CD8-positive, alpha-beta memory T cell (primary cell): ENCODE measurements at regions of chr12 and their contacts with region 1.

Region 1: GRCh38 chr12:54439521-54440255 is 20.6 kb upstream of the ITGA5 start:
- DNase-seq: peak in 2 of 5 donors; percentile 55 to 63
- H3K4me3 ChIP-seq: no peak overlapping the region
- H3K4me3 Mint-ChIP-seq: no peak overlapping the region
- H3K27ac ChIP-seq: no peak overlapping the region
- H3K27ac Mint-ChIP-seq: peak overlapping the region in 4 of 8 donors; percentile 25 to 86 (median 72)
- H3K4me1 ChIP-seq: peaks cover 4% of the 10 kb centered on the region
- H3K4me1 Mint-ChIP-seq: peaks cover 4 to 5% (median 5%) of the 10 kb centered on the region in 3 donors
- H3K27me3 ChIP-seq: no peaks in the 10 kb centered on the region
- H3K27me3 Mint-ChIP-seq: peaks cover 2 to 8% of the 10 kb centered on the region in 2 donors

Region 2: GRCh38 chr12:54300732-54301427 is 138.8 kb before region 1 on chr12 and contains the start of gene NFE2:
- CTCF ChIA-PET with region 1: no interaction called
- POLR2A ChIA-PET with region 1: no interaction called
- DNase-seq: no peak
- H3K4me3 ChIP-seq: peak within 1 kb of the TSS; percentile 33
- H3K4me3 Mint-ChIP-seq: peak within 1 kb of the TSS in 6 of 7 donors; percentile 41 to 60 (median 56)
- H3K27ac ChIP-seq: peak within 1 kb of the TSS; percentile 80
- H3K27ac Mint-ChIP-seq: no peak within 1 kb of the TSS
- H3K4me1 ChIP-seq: peaks cover 8% of the 10 kb centered on the region
- H3K4me1 Mint-ChIP-seq: peaks cover 24 to 44% (median 40%) of the 10 kb centered on the region in 3 donors
- H3K27me3 ChIP-seq: peaks cover 26% of the 10 kb centered on the region
- H3K27me3 Mint-ChIP-seq: peaks cover 32 to 61% of the 10 kb centered on the region in 2 donors
- total RNA-seq, gene NFE2: not detected

Region 3: GRCh38 chr12:54311051-54311450 is 128.6 kb before region 1 on chr12:
- CTCF ChIA-PET with region 1: no interaction called
- POLR2A ChIA-PET with region 1: no interaction called
- DNase-seq: no peak
- H3K4me3 ChIP-seq: no peak overlapping the region
- H3K4me3 Mint-ChIP-seq: no peak overlapping the region
- H3K27ac ChIP-seq: no peak overlapping the region
- H3K27ac Mint-ChIP-seq: no peak overlapping the region
- H3K4me1 ChIP-seq: peaks cover 9% of the 10 kb centered on the region
- H3K4me1 Mint-ChIP-seq: peaks cover 10 to 13% (median 11%) of the 10 kb centered on the region in 3 donors
- H3K27me3 ChIP-seq: no peaks in the 10 kb centered on the region
- H3K27me3 Mint-ChIP-seq: peaks cover 3 to 15% of the 10 kb centered on the region in 2 donors

Region 4: GRCh38 chr12:54379401-54380201 is 60.1 kb before region 1 on chr12:
- CTCF ChIA-PET with region 1: interaction called, 18 read pairs
- POLR2A ChIA-PET with region 1: no interaction called
- DNase-seq: peak; percentile 77 to 89 (median 85)
- H3K4me3 ChIP-seq: peak overlapping the region; percentile 29
- H3K4me3 Mint-ChIP-seq: peak overlapping the region; percentile 11 to 87 (median 71)
- H3K27ac ChIP-seq: no peak overlapping the region
- H3K27ac Mint-ChIP-seq: peak overlapping the region in 3 of 8 donors; percentile 15 to 91 (median 54)
- H3K4me1 ChIP-seq: peaks cover 4% of the 10 kb centered on the region
- H3K4me1 Mint-ChIP-seq: peaks cover 6 to 10% (median 7%) of the 10 kb centered on the region in 3 donors
- H3K27me3 ChIP-seq: no peaks in the 10 kb centered on the region
- H3K27me3 Mint-ChIP-seq: no peaks in the 10 kb centered on the region

Region 5: DNA sequence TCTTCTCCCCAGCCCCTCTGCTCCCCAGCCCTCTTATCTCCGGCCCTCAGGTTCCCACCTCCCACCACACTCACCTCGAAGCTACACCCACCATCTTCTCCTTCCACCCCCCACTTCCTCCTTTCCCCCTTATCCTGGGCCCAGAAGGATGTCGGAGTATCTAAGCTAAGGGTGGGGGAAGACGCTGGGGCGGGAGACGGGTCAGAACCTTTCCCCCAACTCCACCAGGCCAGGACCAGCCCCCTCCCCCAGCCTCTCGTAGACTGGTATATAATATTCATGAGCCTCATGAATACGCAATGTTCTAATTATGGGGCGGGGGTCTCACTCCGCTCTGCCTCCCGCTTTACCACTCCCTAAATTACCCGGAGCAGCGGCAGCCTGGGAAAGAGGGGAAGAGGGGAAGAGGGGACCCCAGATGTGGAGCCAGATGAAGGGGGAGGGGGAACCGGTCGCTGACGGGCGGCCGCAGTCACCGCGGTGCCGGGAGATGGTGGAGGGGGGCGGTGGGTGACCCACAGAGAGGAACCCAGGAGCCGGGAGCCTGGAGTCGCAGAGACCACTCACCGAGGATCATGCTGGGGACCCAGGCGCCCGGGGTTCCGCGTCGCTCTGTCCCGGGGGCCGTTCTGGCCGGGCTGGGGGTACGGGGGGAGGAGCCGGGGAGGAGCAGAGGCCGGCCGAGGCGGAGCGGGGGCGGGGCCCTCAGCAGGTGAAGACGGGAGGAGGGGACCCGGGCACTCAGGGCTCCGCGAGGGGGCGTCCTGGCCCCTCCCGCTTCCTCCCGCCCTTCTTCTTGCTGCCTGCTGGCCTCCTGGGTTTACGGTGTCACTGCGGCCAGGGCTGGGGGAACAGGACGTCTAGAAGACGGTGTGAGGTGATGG is 48.8 kb before region 1 on chr12:
- CTCF ChIA-PET with region 1: interaction called, 386 read pairs
- POLR2A ChIA-PET with region 1: no interaction called
- DNase-seq: peak; percentile 60 to 82 (median 69)
- H3K4me3 ChIP-seq: peak overlapping the region; percentile 50
- H3K4me3 Mint-ChIP-seq: peak overlapping the region; percentile 7 to 91 (median 75)
- H3K27ac ChIP-seq: peak overlapping the region; percentile 38
- H3K27ac Mint-ChIP-seq: peak overlapping the region in 2 of 8 donors; percentile 75 to 91
- H3K4me1 ChIP-seq: peaks cover 22% of the 10 kb centered on the region
- H3K4me1 Mint-ChIP-seq: peaks cover 20 to 36% (median 30%) of the 10 kb centered on the region in 3 donors
- H3K27me3 ChIP-seq: no peaks in the 10 kb centered on the region
- H3K27me3 Mint-ChIP-seq: no peaks in the 10 kb centered on the region

Region 6: DNA sequence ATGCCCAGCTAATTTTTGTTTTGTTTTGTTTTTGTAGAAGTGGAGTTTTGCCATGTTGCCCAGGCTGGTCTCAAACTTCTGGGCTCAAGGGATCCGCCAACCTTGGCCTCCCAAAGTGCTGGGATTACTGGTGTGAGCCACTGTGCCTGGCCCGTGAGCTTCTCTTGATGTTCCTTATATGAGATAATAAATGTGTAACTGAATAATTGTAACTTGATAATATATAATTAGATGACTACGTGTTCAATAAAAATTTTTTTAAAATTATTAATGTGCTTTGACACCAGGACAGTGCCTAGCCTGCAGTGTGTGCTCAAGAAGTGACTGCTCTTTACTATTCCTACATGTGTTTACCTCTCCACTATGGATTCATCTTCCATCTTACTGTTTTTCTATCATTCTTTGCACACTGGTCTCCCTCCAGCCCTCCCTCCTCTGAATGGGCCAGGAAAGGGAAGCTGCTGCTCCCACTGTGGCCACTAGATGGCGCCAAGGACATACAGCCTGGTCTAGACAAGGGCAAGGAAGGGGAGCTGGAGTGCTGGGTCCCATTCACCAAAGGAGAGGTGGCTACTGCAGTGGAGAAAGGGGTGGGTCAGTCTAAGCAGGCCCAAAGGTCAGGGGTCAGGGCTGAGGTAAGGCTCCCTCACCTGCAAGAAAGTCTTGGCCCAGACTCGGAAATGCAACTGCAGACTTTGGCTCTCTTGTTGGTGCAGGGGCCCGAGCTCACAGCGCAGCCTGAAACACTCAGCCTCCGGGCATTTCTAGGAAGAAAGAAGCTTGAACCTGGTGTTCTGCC is 40.5 kb before region 1 on chr12:
- CTCF ChIA-PET with region 1: interaction called, 386 read pairs
- POLR2A ChIA-PET with region 1: interaction called, 17 read pairs
- DNase-seq: peak; percentile 77 to 91 (median 82)
- H3K4me3 ChIP-seq: no peak overlapping the region
- H3K4me3 Mint-ChIP-seq: no peak overlapping the region
- H3K27ac ChIP-seq: no peak overlapping the region
- H3K27ac Mint-ChIP-seq: peak overlapping the region; percentile 7 to 92 (median 44)
- H3K4me1 ChIP-seq: peaks cover 12% of the 10 kb centered on the region
- H3K4me1 Mint-ChIP-seq: peaks cover 10 to 23% (median 15%) of the 10 kb centered on the region in 3 donors
- H3K27me3 ChIP-seq: no peaks in the 10 kb centered on the region
- H3K27me3 Mint-ChIP-seq: no peaks in the 10 kb centered on the region

Region 7: DNA sequence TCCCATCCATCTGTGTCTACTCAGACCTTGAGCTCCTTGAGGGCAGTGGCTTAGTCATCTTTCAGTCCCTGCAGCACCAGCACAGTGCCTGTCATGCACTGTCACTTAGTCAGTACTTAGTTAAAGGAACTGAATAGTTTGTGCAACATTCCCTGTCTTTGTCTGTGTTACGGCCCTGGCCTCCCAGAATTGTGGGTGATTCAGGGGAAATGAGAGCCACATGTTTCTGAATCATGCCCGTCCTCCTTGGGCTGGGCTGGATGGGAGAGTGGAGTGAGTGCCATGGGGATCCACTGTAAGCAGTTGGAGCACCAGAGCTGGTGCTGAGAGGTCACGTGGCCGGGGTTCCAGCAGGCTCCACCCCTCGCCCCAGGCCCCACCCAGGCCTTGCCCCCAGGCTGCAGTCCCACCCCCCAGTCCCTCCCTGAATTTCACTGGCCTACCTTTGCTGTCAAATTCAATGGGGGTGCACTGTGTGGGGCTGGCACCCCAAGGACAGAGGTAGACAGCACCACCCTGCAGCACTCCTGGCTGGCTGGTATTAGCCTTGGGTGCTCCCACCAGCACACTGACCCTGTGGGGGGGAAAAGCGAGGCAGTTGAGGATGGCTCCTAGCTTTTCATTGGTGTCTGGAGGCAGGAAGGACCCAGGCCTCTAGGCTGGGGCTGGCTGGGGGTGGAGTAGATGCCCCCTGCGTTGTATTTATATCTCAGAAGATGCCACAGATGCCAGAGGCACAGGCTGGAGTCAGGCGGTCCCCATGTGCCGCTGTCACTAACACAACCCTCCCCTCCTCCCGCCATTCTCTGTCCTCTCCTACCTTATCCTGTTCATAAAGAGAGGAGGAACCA is 28.1 kb before region 1 on chr12:
- CTCF ChIA-PET with region 1: interaction called, 386 read pairs
- POLR2A ChIA-PET with region 1: interaction called, 3 read pairs
- DNase-seq: peak in 4 of 5 donors; percentile 37 to 62 (median 50)
- H3K4me3 ChIP-seq: peak overlapping the region; percentile 85
- H3K4me3 Mint-ChIP-seq: peak overlapping the region; percentile 32 to 88 (median 71)
- H3K27ac ChIP-seq: peak overlapping the region; percentile 81
- H3K27ac Mint-ChIP-seq: peak overlapping the region; percentile 91 to 100 (median 96)
- H3K4me1 ChIP-seq: peaks cover 65% of the 10 kb centered on the region
- H3K4me1 Mint-ChIP-seq: peaks cover 63 to 78% (median 66%) of the 10 kb centered on the region in 3 donors
- H3K27me3 ChIP-seq: no peaks in the 10 kb centered on the region
- H3K27me3 Mint-ChIP-seq: no peaks in the 10 kb centered on the region

Region 8: DNA sequence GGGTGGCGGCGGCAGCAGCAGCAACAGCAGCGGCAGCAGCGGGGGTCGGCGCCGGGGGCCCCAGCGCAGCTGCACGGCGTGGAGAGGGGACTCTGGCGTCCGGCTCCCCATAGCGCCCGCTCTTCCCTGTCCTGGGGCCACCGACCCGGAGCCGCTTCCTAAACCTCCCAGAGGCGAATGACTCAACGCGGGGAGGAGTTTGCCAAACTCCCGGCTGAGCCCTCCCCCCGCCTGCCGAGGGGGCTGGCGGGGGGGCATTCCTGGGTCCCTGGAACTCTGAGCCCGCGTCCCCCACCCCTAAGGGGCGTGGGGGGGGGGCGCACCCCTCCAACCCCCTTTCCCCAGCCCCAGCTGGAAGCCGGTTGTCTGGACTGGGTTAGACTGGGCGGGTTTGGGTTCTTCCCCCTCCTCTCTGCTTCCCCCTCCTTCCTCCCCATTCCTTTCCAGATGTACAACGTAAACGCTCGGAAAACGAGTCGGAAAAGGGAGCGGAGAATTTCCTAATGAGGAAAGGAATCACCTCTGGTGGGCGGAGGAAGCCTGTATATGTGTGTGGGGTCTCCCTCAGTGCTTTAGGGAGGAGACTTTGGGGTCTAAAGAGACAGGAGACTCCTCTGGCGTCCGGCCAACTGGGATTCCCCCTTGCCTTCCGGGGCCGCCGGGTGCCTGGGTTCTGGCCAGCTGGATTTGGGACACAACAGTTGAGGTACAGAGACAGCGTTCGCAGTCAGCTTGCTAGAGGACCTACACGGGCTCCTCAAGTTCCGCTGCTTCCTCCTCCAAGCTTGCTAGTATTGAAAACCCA is 20.4 kb before region 1 on chr12 and contains the start of gene ITGA5:
- CTCF ChIA-PET with region 1: interaction called, 39 read pairs
- POLR2A ChIA-PET with region 1: interaction called, 4 read pairs
- DNase-seq: peak in 4 of 5 donors; percentile 41 to 66 (median 52)
- H3K4me3 ChIP-seq: peak within 1 kb of the TSS; percentile 89
- H3K4me3 Mint-ChIP-seq: peak within 1 kb of the TSS; percentile 71 to 99 (median 94)
- H3K27ac ChIP-seq: peak within 1 kb of the TSS; percentile 91
- H3K27ac Mint-ChIP-seq: peak within 1 kb of the TSS; percentile 93 to 100 (median 96)
- H3K4me1 ChIP-seq: peaks cover 52% of the 10 kb centered on the region
- H3K4me1 Mint-ChIP-seq: peaks cover 48 to 65% (median 57%) of the 10 kb centered on the region in 3 donors
- H3K27me3 ChIP-seq: no peaks in the 10 kb centered on the region
- H3K27me3 Mint-ChIP-seq: peaks cover 0 to 13% of the 10 kb centered on the region in 2 donors
- total RNA-seq, gene ITGA5: 23.2 to 25.7 TPM

Region 9: GRCh38 chr12:54425702-54426101 is 14.0 kb before region 1 on chr12:
- CTCF ChIA-PET with region 1: interaction called, 21 read pairs
- POLR2A ChIA-PET with region 1: no interaction called
- DNase-seq: no peak
- H3K4me3 ChIP-seq: no peak overlapping the region
- H3K4me3 Mint-ChIP-seq: no peak overlapping the region
- H3K27ac ChIP-seq: no peak overlapping the region
- H3K27ac Mint-ChIP-seq: peak overlapping the region in 2 of 8 donors; percentile 68 to 81
- H3K4me1 ChIP-seq: peaks cover 20% of the 10 kb centered on the region
- H3K4me1 Mint-ChIP-seq: peaks cover 29 to 38% (median 29%) of the 10 kb centered on the region in 3 donors
- H3K27me3 ChIP-seq: no peaks in the 10 kb centered on the region
- H3K27me3 Mint-ChIP-seq: peaks cover 13 to 18% of the 10 kb centered on the region in 2 donors